ENCODE measurements at regions of chr17 and their contacts with region 1.

Region 1: DNA sequence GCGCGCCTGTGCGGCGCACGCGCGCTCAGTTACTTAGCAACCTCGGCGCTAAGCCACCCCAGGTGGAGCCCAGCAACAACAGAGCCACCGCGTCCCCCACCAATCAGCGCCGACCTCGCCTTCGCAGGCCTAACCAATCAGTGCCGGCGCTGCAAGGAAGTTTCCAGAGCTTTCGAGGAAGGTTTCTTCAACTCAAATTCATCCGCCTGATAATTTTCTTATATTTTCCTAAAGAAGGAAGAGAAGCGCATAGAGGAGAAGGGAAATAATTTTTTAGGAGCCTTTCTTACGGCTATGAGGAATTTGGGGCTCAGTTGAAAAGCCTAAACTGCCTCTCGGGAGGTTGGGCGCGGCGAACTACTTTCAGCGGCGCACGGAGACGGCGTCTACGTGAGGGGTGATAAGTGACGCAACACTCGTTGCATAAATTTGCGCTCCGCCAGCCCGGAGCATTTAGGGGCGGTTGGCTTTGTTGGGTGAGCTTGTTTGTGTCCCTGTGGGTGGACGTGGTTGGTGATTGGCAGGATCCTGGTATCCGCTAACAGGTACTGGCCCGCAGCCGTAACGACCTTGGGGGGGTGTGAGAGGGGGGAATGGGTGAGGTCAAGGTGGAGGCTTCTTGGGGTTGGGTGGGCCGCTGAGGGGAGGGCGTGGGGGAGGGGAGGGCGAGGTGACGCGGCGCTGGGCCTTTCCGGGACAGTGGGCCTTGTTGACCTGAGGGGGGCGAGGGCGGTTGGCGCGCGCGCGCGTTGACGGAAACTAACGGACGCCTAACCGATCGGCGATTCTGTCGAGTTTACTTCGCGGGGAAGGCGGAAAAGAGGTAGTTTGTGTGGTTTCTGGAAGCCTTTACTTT is at the start of gene UBB:
- DNase-seq: peak; percentile 92 to 97
- H3K4me3 ChIP-seq: peak within 1 kb of the TSS; percentile 82 to 83
- H3K27ac ChIP-seq: peak within 1 kb of the TSS; percentile 90 to 94
- H3K4me1 ChIP-seq: peaks cover 8 to 15% of the 10 kb centered on the region in 2 donors
- H3K27me3 ChIP-seq: no peaks in the 10 kb centered on the region
- CTCF ChIP-seq: no peak
- total RNA-seq, gene UBB: 615 TPM

Region 2: GRCh38 chr17:16297367-16298139 is 83.3 kb before region 1 on chr17:
- intact Hi-C with region 1: no loop called
- DNase-seq: no peak
- H3K4me3 ChIP-seq: no peak overlapping the region
- H3K27ac ChIP-seq: no peak overlapping the region
- H3K4me1 ChIP-seq: peaks cover 0 to 2% of the 10 kb centered on the region in 2 donors
- H3K27me3 ChIP-seq: no peaks in the 10 kb centered on the region
- CTCF ChIP-seq: no peak

Region 3: DNA sequence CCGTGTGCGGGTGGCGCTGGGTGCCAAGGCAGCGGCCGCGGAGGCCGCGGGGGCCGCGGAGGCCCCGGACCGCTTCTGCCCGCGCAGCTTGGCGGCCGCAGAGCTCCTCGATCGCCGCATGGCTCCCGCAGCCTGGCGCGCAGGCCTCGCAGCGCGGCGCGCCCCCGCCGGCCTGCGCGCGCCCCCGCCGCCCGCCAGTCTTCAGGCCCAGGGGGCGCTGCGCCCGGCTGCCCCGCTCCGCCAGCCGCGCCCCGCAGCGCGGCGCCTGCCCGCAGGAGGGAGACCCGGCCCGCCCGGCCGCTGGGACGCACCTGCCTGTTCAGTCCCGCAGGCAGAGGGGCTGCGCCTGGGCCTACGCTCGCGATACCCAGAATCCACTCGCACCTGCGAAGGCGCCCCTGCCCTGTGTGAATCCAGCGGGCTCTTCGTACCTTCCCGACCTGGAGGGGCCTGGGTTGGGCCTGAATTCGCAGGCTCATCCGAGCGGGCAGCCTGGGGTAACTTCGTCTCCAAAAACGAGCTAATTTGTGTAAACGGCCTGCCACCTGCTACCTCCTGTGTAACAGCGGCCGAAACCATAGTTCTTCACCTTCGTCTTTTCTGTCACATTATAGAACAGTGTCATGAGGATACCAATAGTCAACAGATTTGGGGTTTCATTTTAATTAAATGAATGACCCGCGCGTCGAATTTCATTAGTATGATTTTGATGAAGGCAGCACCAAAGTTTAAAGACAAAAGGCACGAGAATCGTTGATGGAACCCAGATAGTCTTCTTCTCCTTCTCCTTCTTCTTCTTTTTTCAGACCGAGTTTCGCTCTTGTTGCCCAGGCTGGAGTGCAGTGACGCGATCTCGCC is 27.3 kb before region 1 on chr17 and contains the start of gene CENPV:
- intact Hi-C with region 1: no loop called
- DNase-seq: peak in 1 of 2 donors; percentile 65
- H3K4me3 ChIP-seq: peak within 1 kb of the TSS; percentile 92 to 99
- H3K27ac ChIP-seq: peak within 1 kb of the TSS; percentile 63 to 73
- H3K4me1 ChIP-seq: peaks cover 0 to 10% of the 10 kb centered on the region in 2 donors
- H3K27me3 ChIP-seq: no peaks in the 10 kb centered on the region
- CTCF ChIP-seq: no peak
- total RNA-seq, gene CENPV: 37.6 TPM

Region 4: DNA sequence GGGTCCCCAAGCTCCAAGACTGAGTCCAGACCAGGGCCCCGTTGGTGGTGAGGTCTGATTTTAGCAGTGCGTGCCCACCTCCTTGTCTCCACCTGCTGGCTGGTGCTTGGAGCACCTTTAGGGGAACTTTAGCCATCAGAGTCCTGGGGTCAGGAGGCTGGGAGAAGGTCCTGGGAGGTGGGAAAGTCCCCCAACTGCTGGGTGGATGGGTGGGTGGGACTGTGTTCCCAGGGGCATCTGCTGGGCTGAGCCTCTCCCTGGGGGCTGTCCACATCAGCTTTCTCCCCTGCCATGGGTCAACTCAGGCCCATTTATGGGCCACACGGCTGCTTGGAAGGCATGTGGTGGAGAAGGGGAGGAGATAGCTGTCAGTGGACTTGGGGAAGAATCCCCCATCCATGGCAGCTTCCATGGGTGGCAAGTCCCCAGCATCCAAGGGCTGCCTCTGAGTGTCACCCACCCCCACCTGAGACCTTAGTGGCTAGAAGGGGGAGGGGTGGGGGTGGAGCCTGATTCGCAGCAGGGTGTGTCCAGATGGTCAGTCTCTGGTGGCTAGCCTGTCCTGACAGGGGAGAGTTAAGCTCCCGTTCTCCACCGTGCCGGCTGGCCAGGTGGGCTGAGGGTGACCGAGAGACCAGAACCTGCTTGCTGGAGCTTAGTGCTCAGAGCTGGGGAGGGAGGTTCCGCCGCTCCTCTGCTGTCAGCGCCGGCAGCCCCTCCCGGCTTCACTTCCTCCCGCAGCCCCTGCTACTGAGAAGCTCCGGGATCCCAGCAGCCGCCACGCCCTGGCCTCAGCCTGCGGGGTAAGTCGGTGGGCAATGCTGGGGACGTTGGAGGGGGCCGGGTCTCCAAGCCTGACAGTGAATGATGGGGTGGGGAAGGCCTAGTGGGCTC is 34.4 kb after region 1 on chr17 and contains the start of gene TRPV2:
- intact Hi-C with region 1: loop called (anchors 2 kb)
- DNase-seq: no peak
- H3K4me3 ChIP-seq: peak within 1 kb of the TSS; percentile 44 to 61
- H3K27ac ChIP-seq: peak within 1 kb of the TSS; percentile 81 to 97
- H3K4me1 ChIP-seq: peaks cover 14 to 26% of the 10 kb centered on the region in 2 donors
- H3K27me3 ChIP-seq: no peaks in the 10 kb centered on the region
- CTCF ChIP-seq: peak in 1 of 3 experiments; percentile 32
- total RNA-seq, gene TRPV2: 26.1 TPM